ENCODE measurements at regions of chr5 and their contacts with region 1.

Region 1: DNA sequence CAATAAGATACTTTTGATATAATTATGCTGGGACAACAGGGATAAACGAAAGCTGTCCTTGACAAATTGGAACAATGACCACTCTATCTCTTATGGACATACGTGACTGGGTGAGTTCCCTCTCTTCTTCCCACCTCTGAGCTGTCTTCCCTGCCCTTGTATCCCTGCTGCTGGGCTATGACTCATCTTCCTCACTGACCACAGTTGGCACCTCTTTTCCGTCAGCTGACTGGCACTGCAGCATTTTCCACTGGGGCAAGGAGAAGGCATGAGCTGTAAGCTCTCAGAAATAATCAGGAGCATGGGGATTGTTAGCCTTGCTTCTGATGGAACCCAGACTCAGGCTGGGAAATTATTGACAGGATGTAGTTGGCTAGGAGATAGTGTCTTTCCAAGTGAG is 48.7 kb downstream of the PCSK1 start:
- DNase-seq: peak; percentile 48 to 87 (median 70)
- ATAC-seq: peak; percentile 96 to 97 (median 97)
- H3K4me3 ChIP-seq: no peak overlapping the region
- H3K27ac ChIP-seq: peak overlapping the region; percentile 15 to 88 (median 70)
- H3K4me1 ChIP-seq: peaks cover 0 to 22% (median 0%) of the 10 kb centered on the region in 12 donors
- H3K27me3 ChIP-seq: no peaks in the 10 kb centered on the region
- CTCF ChIP-seq: no peak
- POLR2A ChIP-seq: no peak

Region 2: DNA sequence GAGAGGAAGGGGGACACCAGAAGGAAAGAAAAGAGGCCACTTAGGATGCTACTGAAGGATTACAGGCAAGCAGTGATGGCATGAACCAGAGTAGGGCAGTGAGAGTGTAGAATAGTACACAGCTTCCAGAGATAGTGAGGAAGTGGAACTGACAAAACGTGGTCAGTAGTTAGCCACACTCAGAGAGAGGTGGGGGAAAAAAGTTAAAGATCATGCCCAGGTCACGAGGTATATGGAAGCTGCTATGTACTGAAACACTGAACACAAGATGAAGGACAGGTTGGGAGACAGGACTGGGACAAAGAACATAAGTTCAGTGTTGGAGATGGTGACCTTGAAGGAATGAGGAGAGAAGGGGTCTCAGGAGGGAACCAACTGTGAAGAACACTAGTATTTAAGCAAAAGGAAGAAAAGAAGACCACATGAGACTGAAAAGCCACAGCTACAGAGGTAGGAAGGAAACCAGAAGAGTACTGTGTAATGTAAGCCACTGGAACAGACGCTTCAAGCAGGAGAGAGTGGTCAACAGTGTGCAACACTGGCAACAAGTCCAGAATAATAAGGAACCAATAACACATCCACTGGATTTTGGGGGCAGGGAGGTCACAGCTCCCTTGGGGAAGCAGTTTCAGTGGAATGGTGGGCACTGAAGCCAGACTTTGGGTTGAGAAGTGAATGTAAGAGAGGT is 468.2 kb before region 1 on chr5:
- intact Hi-C with region 1: no loop called
- DNase-seq: no peak
- ATAC-seq: peak in 3 of 4 donors; percentile 17 to 54 (median 36)
- H3K4me3 ChIP-seq: no peak overlapping the region
- H3K27ac ChIP-seq: peak overlapping the region in 2 of 12 donors; percentile 22 to 39
- H3K4me1 ChIP-seq: peaks cover 0 to 33% (median 20%) of the 10 kb centered on the region in 12 donors
- H3K27me3 ChIP-seq: no peaks in the 10 kb centered on the region
- CTCF ChIP-seq: no peak
- POLR2A ChIP-seq: no peak

Region 3: DNA sequence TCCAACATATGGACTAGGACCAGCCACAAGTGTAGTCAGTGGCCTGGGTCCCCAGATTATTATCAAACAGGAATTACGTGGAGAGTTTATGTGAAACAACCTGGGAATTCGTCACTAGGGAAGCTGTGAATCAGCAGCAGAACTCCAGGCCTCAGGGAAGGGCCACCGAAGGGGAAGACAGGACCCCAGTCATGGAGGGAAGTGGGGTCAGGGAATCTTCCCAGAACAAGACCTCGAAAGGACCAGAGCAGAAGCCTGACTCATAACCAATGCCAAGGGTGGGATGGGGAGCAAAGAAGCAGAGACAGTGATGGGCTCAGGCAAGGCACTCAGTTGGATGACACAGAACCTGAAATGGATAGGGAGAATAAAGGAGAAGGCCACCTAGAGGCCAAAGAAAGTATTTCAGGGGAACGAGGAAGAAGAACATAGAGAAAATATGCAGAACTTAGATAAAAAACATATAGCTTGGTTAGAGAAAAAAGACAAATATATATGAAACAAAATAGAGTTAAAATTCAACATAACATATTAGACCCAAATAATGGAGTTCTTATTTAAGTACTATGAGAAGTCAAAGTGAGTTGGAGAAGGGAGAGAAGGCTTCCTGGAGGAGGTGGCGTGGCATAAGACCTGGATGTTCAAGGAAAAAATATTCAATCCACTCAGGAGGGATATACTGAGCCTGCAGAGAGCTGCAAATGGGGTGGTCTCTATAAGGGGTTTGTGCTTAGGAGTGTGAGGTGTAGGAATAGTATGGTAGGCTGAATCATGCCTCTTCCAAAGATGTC is 211.1 kb after region 1 on chr5:
- intact Hi-C with region 1: loop called in 4 of 10 experiments (anchors 5 to 10 kb)
- DNase-seq: no peak
- ATAC-seq: no peak
- H3K4me3 ChIP-seq: no peak overlapping the region
- H3K27ac ChIP-seq: no peak overlapping the region
- H3K4me1 ChIP-seq: peaks cover 0 to 6% (median 0%) of the 10 kb centered on the region in 12 donors
- H3K27me3 ChIP-seq: no peaks in the 10 kb centered on the region
- CTCF ChIP-seq: peak in 8 of 12 donors; percentile 7 to 48 (median 27)
- POLR2A ChIP-seq: no peak

Region 4: GRCh38 chr5:96601811-96602244 is 217.5 kb after region 1 on chr5:
- intact Hi-C with region 1: loop called in 4 of 10 experiments (anchors 5 to 10 kb)
- DNase-seq: peak in 2 of 5 donors; percentile 37 to 48
- ATAC-seq: peak; percentile 68 to 92 (median 85)
- H3K4me3 ChIP-seq: peak overlapping the region in 3 of 12 donors; percentile 15 to 27 (median 27)
- H3K27ac ChIP-seq: no peak overlapping the region
- H3K4me1 ChIP-seq: peaks cover 0 to 9% (median 0%) of the 10 kb centered on the region in 12 donors
- H3K27me3 ChIP-seq: no peaks in the 10 kb centered on the region
- CTCF ChIP-seq: peak; percentile 76 to 90 (median 82)
- POLR2A ChIP-seq: no peak